Gastrocnemius medialis (tissue), 4 donors: ENCODE measurements at regions of chr22 and their contacts with region 1.

Region 1: DNA sequence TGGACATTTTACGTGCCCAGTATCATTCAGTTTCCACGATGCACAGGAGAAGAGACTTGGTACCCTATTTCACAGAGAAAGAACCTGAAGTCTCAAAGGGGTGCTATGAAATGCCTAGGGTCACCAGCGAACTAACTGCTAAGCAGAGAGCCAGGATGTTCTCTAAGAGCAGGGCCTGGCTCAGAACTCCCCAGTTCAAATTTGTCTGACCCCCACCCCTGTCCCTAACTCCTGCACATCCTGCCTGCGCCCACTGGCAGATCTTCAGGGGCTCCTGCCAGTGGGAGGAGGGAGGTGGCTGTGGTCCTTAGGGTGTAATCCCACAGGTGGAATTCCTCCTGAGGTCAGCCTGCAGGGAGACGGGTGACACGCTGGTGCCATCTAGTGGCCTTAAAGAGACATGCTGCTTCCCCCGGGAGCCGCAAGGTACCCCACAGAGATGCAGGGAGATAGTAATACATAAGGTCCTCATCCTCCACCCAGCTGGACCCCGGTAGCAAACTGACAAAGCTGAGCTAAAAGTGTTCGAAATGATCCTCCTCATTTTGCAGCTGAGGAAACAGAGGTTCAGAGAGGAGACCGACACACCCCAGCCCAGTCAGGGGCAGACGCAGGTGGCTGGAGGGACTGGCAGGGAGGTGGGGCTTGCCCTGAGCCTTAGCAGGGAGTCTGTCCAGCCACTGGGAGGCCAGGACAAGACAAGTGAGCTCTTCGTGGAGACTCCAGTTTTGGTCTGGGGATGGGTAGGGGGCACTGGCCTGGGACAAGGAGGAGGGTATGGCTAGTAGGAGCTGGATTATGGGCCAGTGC is 34.1 kb downstream of the MB start:
- DNase-seq: peak in 1 of 2 donors; percentile 63
- ATAC-seq: peak in 1 of 2 donors; percentile 26
- H3K4me3 ChIP-seq: no peak overlapping the region
- H3K27ac ChIP-seq: peak overlapping the region; percentile 25 to 69 (median 54)
- H3K4me1 ChIP-seq: peaks cover 9 to 17% of the 10 kb centered on the region in 2 donors
- H3K27me3 ChIP-seq: no peaks in the 10 kb centered on the region
- CTCF ChIP-seq: peak; percentile 91 to 97 (median 94)
- POLR2A ChIP-seq: no peak

Region 2: DNA sequence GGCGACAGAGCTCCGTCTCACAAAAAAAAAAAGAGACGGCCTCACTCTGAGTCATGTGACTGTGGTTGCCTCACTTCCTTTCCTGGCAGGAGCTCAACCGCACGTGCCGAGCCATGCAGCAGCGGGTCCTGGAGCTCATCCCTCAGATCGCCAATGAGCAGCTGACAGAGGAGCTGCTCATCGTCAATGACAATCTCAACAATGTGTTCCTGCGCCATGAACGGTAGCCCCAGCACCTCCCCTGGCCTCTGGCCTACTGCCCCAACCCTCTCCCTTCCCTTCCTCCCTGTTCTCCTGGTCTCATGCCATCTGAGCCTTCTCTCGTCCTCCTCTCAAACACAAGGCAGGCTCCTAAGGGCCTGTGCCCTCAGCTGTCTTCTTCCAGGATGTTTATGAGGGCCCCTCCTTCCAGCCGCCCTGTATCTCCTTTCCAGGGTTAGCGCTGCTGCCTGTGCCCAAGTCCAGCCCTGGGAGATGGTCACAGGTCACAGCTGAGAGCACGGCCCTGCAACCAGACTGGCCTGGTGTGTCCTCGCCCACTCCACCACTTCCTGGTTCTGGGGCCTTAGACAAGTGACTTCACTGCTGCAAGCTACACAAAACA is 252.7 kb before region 1 on chr22:
- in situ Hi-C with region 1: loop called in 2 of 4 experiments (anchors 25 kb)
- intact Hi-C with region 1: no loop called
- DNase-seq: peak; percentile 88 to 94
- ATAC-seq: peak; percentile 72 to 86
- H3K4me3 ChIP-seq: no peak overlapping the region
- H3K27ac ChIP-seq: peak overlapping the region; percentile 83 to 98 (median 92)
- H3K4me1 ChIP-seq: peaks cover 7 to 14% of the 10 kb centered on the region in 2 donors
- H3K27me3 ChIP-seq: no peaks in the 10 kb centered on the region
- CTCF ChIP-seq: no peak
- POLR2A ChIP-seq: peak; percentile 54 to 55

Region 3: GRCh38 chr22:35350539-35351503 is 232.2 kb before region 1 on chr22:
- in situ Hi-C with region 1: loop called in 2 of 4 experiments (anchors 25 kb)
- intact Hi-C with region 1: loop called (anchors 1 kb)
- DNase-seq: peak; percentile 94 to 95
- ATAC-seq: peak; percentile 84 to 86
- H3K4me3 ChIP-seq: peak overlapping the region; percentile 53 to 75 (median 61)
- H3K27ac ChIP-seq: peak overlapping the region; percentile 83 to 91 (median 86)
- H3K4me1 ChIP-seq: peaks cover 16 to 24% of the 10 kb centered on the region in 2 donors
- H3K27me3 ChIP-seq: no peaks in the 10 kb centered on the region
- CTCF ChIP-seq: peak; percentile 93 to 97 (median 95)
- POLR2A ChIP-seq: peak; percentile 68 to 75

Region 4: GRCh38 chr22:35454416-35455054 is 128.5 kb before region 1 on chr22:
- in situ Hi-C with region 1: no loop called
- intact Hi-C with region 1: loop called (anchors 1 kb)
- DNase-seq: peak in 1 of 2 donors; percentile 33
- ATAC-seq: peak; percentile 72 to 79
- H3K4me3 ChIP-seq: no peak overlapping the region
- H3K27ac ChIP-seq: no peak overlapping the region
- H3K4me1 ChIP-seq: no peaks in the 10 kb centered on the region
- H3K27me3 ChIP-seq: no peaks in the 10 kb centered on the region
- CTCF ChIP-seq: peak; percentile 22 to 43 (median 25)
- POLR2A ChIP-seq: no peak

Region 5: DNA sequence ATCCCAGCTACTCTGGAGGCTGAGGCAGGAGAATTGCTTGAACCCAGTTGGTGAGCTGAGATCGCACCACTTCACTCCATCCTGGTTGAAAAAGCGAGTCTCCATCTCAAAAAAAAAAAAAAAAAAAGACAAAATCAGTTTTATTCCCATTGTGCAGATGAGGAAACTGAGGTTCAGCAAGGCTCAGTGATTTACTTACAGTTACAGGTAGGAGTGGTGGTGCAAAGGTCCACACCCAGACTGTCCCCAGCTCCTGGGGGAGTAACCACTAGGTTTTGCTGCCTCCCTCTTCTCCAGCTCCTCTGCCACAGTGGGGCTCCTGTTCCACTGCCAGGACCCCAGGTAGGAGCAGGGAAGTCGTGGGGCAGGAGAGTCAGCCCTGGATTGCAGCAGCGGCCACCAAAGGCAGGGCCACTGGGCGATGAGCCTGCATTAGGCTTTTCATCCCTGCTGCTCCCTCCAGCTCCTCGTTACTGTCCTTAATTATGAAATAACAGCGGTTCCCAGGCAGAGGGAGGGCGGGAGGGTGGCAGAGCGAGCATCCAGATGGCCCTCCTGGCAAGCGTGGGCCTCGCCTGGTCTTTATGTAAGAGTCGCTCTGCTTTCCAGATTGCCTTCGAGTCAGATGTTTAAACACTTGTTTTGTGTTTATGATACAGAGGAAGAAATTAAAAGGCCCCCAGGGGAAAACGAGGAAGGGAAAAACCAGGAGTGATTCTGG is 57.9 kb before region 1 on chr22:
- in situ Hi-C with region 1: loop called in 1 of 4 experiments (anchors 10 kb)
- intact Hi-C with region 1: no loop called
- DNase-seq: peak in 1 of 2 donors; percentile 45
- ATAC-seq: peak; percentile 48 to 54
- H3K4me3 ChIP-seq: peak overlapping the region in 1 of 4 donors; percentile 18
- H3K27ac ChIP-seq: peak overlapping the region; percentile 23 to 58 (median 55)
- H3K4me1 ChIP-seq: no peaks in the 10 kb centered on the region
- H3K27me3 ChIP-seq: no peaks in the 10 kb centered on the region
- CTCF ChIP-seq: no peak
- POLR2A ChIP-seq: no peak

Region 6: GRCh38 chr22:35539910-35540594 is 43.0 kb before region 1 on chr22:
- in situ Hi-C with region 1: no loop called
- intact Hi-C with region 1: loop called (anchors 2 kb)
- DNase-seq: peak; percentile 46 to 69
- ATAC-seq: peak; percentile 63
- H3K4me3 ChIP-seq: peak overlapping the region; percentile 72 to 78 (median 74)
- H3K27ac ChIP-seq: peak overlapping the region; percentile 85 to 96 (median 90)
- H3K4me1 ChIP-seq: peaks cover 32 to 34% of the 10 kb centered on the region in 2 donors
- H3K27me3 ChIP-seq: no peaks in the 10 kb centered on the region
- CTCF ChIP-seq: peak in 2 of 5 experiments; percentile 5 to 23
- POLR2A ChIP-seq: peak; percentile 62 to 77

Region 7: GRCh38 chr22:35558031-35558430 is 25.0 kb before region 1 on chr22:
- in situ Hi-C with region 1: no loop called
- intact Hi-C with region 1: loop called (anchors 1 kb)
- DNase-seq: no peak
- ATAC-seq: no peak
- H3K4me3 ChIP-seq: no peak overlapping the region
- H3K27ac ChIP-seq: no peak overlapping the region
- H3K4me1 ChIP-seq: no peaks in the 10 kb centered on the region
- H3K27me3 ChIP-seq: no peaks in the 10 kb centered on the region
- CTCF ChIP-seq: no peak
- POLR2A ChIP-seq: no peak

Region 8: DNA sequence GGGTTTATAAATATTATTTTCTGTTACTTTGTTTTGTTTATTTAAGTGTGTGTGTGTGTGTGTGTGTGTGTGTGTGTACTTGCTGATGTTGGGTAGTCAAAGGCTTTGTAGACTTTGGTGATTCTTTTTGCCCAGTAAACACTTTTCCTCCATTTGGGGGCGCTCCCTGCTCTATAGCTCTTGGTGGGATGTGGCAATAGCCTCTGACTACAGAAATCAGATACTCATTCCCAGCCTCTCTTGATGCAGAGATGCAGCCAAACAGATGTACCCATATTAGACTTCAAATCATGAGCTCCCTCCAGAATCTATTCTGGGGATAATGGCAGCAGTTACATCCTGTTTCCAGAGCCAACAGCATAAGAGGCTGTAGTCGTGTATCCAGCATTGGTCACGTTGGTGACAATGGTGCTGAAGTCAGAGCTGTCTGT is 101.2 kb after region 1 on chr22:
- in situ Hi-C with region 1: no loop called
- intact Hi-C with region 1: no loop called
- DNase-seq: peak; percentile 71 to 81
- ATAC-seq: peak; percentile 93 to 97
- H3K4me3 ChIP-seq: no peak overlapping the region
- H3K27ac ChIP-seq: peak overlapping the region; percentile 74 to 94 (median 90)
- H3K4me1 ChIP-seq: peaks cover 28 to 31% of the 10 kb centered on the region in 2 donors
- H3K27me3 ChIP-seq: no peaks in the 10 kb centered on the region
- CTCF ChIP-seq: peak in 4 of 5 experiments; percentile 40 to 53 (median 49)
- POLR2A ChIP-seq: no peak